Naive thymus-derived CD4-positive, alpha-beta T cell (primary cell): ENCODE measurements at regions of chr3 and their contacts with region 1.

Region 1: GRCh38 chr3:27721717-27722542 is at the start of gene EOMES:
- DNase-seq: peak; percentile 57 to 81 (median 71)
- ATAC-seq: peak; percentile 84
- H3K4me3 ChIP-seq: peak within 1 kb of the TSS; percentile 68
- H3K4me3 Mint-ChIP-seq: peak within 1 kb of the TSS; percentile 79 to 93 (median 86)
- H3K27ac ChIP-seq: no peak within 1 kb of the TSS
- H3K27ac Mint-ChIP-seq: peak within 1 kb of the TSS in 3 of 9 donors; percentile 8 to 74 (median 56)
- H3K4me1 ChIP-seq: peaks cover 16 to 30% of the 10 kb centered on the region in 2 donors
- H3K4me1 Mint-ChIP-seq: peaks cover 19 to 42% (median 31%) of the 10 kb centered on the region in 7 donors
- H3K27me3 ChIP-seq: peaks cover 0 to 41% of the 10 kb centered on the region in 2 donors
- H3K27me3 Mint-ChIP-seq: peaks cover 44 to 89% (median 63%) of the 10 kb centered on the region in 5 donors
- total RNA-seq, gene EOMES: 0.67 to 9.5 (median 1.4) TPM

Region 2: GRCh38 chr3:27209617-27210264 is 512.2 kb before region 1 on chr3:
- CTCF ChIA-PET with region 1: no interaction called
- POLR2A ChIA-PET with region 1: no interaction called
- intact Hi-C with region 1: no loop called
- DNase-seq: no peak
- ATAC-seq: no peak
- H3K4me3 ChIP-seq: no peak overlapping the region
- H3K4me3 Mint-ChIP-seq: no peak overlapping the region
- H3K27ac ChIP-seq: no peak overlapping the region
- H3K27ac Mint-ChIP-seq: no peak overlapping the region
- H3K4me1 ChIP-seq: no peaks in the 10 kb centered on the region
- H3K4me1 Mint-ChIP-seq: no peaks in the 10 kb centered on the region
- H3K27me3 ChIP-seq: no peaks in the 10 kb centered on the region
- H3K27me3 Mint-ChIP-seq: peaks cover 0 to 6% (median 0%) of the 10 kb centered on the region in 5 donors

Region 3: DNA sequence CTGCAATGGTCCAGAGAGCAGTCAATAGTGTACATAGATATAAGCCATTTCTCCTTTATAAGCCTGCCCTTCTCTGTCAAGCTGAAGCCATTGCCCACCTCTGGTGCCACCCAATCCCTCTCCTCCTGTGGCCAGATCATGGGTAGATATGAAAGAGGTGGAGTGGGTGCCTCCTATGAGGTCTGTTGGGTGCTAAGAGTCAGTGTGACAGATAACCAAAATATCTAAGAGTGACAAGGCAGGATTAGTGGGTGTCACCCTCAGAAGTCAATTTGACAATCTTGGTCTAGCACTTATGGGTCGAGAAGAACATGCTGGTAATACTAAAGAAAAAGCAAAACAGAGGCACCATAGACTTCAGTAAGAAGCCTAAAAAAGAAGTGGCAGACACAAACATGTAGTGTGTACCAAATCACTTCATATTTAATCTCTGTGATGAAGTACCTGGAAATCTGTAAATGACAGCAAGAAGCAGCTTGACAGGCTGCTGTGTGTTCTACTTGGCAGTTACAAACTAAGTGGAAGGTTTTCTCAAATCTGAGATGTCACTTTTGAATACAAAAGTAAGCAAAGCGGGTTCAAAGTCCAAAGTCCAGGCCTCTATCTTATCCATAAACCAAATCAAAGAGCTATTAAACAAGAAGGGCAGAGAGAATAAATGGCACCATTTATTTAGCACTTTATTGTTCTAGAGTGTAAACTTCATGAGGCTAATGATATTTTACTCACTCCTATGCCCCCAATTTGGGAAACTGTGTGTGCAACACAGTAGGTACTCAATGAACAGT is 119.1 kb after region 1 on chr3:
- CTCF ChIA-PET with region 1: no interaction called
- POLR2A ChIA-PET with region 1: no interaction called
- intact Hi-C with region 1: no loop called
- DNase-seq: no peak
- ATAC-seq: peak; percentile 70
- H3K4me3 ChIP-seq: no peak overlapping the region
- H3K4me3 Mint-ChIP-seq: no peak overlapping the region
- H3K27ac ChIP-seq: no peak overlapping the region
- H3K27ac Mint-ChIP-seq: no peak overlapping the region
- H3K4me1 ChIP-seq: peaks cover 0 to 18% of the 10 kb centered on the region in 2 donors
- H3K4me1 Mint-ChIP-seq: peaks cover 4 to 32% (median 19%) of the 10 kb centered on the region in 7 donors
- H3K27me3 ChIP-seq: no peaks in the 10 kb centered on the region
- H3K27me3 Mint-ChIP-seq: no peaks in the 10 kb centered on the region

Region 4: DNA sequence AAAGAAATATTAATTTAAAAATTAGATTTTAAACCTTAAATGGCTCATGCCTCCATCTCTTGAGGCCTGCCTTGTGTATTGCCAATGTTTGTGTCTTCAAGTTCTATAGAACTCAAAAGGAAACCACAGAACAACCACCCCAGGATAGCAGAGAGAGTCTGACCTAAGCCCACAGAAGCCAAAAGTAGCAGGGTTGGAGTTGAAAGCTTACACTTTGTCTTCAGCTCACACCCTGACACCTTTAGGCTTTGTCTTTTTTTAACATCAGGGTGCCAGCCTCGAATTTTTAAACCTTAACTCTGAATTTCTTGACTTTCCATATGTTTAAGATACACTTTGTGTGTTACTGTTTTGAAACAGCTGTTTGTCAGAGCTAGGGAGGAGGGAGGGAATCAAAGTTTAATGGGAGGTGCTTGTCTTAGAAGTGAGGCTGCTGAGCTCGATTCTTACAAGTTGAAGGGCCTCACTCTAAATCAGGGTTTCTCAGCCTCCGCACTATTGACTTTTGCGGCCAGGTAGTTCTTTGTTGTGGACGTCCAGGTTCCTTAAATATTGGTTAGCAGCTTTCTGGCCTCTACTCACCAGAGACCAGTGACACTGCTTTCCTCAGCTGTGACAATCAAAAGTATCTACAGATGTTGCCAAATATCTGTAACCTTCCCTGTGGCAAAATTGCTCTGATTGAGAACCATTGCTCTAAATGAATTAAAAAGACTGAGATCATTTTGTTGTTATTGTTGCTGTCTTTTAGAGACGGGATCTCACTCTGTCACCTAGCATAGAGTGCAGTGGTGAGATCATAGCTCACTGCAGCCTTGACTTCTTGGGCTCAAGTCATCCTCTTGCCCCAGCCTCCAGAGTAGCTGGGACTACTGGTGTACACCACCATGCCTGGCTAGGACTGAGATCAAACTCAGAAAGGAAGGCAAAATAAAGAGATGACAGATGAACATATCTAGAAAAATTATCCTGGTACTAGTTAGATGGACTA is 139.4 kb after region 1 on chr3:
- CTCF ChIA-PET with region 1: interaction called, 3 read pairs
- POLR2A ChIA-PET with region 1: interaction called, 3 read pairs
- intact Hi-C with region 1: loop called in 1 of 2 experiments (anchors 2 kb)
- DNase-seq: peak in 6 of 9 donors; percentile 25 to 56 (median 45)
- ATAC-seq: peak; percentile 86
- H3K4me3 ChIP-seq: no peak overlapping the region
- H3K4me3 Mint-ChIP-seq: peak overlapping the region; percentile 4 to 64 (median 55)
- H3K27ac ChIP-seq: peak overlapping the region; percentile 47
- H3K27ac Mint-ChIP-seq: peak overlapping the region; percentile 83 to 95 (median 92)
- H3K4me1 ChIP-seq: peaks cover 23 to 26% of the 10 kb centered on the region in 2 donors
- H3K4me1 Mint-ChIP-seq: peaks cover 23 to 56% (median 52%) of the 10 kb centered on the region in 7 donors
- H3K27me3 ChIP-seq: no peaks in the 10 kb centered on the region
- H3K27me3 Mint-ChIP-seq: no peaks in the 10 kb centered on the region

Region 5: DNA sequence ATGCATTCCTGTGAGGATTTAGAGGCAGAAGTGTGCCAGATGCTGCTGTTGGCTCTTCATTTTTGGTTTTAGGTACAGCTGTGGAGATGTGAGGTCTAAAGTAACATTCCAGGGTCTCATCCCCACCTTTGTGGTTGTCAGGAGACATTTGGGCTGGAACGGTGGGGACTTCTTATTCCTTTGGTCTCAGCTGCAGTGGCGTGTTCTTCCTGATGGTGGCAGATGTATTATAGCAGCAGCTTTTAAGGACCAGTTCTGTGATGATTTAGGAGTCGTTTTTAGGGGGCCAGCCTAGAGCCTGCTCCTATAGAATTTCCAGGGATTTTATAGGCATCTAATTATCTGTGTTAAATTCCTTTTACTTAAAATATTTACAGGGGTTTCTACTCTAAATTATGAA is 221.2 kb after region 1 on chr3:
- CTCF ChIA-PET with region 1: interaction called, 4 read pairs
- POLR2A ChIA-PET with region 1: no interaction called
- intact Hi-C with region 1: loop called in 1 of 2 experiments (anchors 5 kb)
- DNase-seq: peak in 3 of 9 donors; percentile 2 to 12 (median 3)
- ATAC-seq: no peak
- H3K4me3 ChIP-seq: no peak overlapping the region
- H3K4me3 Mint-ChIP-seq: no peak overlapping the region
- H3K27ac ChIP-seq: no peak overlapping the region
- H3K27ac Mint-ChIP-seq: no peak overlapping the region
- H3K4me1 ChIP-seq: no peaks in the 10 kb centered on the region
- H3K4me1 Mint-ChIP-seq: peaks cover 0 to 12% (median 4%) of the 10 kb centered on the region in 7 donors
- H3K27me3 ChIP-seq: no peaks in the 10 kb centered on the region
- H3K27me3 Mint-ChIP-seq: no peaks in the 10 kb centered on the region

Region 6: GRCh38 chr3:28089527-28089897 is 367.6 kb after region 1 on chr3:
- CTCF ChIA-PET with region 1: interaction called, 4 read pairs
- POLR2A ChIA-PET with region 1: interaction called, 5 read pairs
- intact Hi-C with region 1: loop called in 1 of 2 experiments (anchors 1 kb)
- DNase-seq: peak in 5 of 9 donors; percentile 0 to 18 (median 8)
- ATAC-seq: no peak
- H3K4me3 ChIP-seq: no peak overlapping the region
- H3K4me3 Mint-ChIP-seq: peak overlapping the region in 1 of 10 donors; percentile 12
- H3K27ac ChIP-seq: no peak overlapping the region
- H3K27ac Mint-ChIP-seq: no peak overlapping the region
- H3K4me1 ChIP-seq: no peaks in the 10 kb centered on the region
- H3K4me1 Mint-ChIP-seq: peaks cover 0 to 10% (median 0%) of the 10 kb centered on the region in 7 donors
- H3K27me3 ChIP-seq: no peaks in the 10 kb centered on the region
- H3K27me3 Mint-ChIP-seq: no peaks in the 10 kb centered on the region

Region 7: DNA sequence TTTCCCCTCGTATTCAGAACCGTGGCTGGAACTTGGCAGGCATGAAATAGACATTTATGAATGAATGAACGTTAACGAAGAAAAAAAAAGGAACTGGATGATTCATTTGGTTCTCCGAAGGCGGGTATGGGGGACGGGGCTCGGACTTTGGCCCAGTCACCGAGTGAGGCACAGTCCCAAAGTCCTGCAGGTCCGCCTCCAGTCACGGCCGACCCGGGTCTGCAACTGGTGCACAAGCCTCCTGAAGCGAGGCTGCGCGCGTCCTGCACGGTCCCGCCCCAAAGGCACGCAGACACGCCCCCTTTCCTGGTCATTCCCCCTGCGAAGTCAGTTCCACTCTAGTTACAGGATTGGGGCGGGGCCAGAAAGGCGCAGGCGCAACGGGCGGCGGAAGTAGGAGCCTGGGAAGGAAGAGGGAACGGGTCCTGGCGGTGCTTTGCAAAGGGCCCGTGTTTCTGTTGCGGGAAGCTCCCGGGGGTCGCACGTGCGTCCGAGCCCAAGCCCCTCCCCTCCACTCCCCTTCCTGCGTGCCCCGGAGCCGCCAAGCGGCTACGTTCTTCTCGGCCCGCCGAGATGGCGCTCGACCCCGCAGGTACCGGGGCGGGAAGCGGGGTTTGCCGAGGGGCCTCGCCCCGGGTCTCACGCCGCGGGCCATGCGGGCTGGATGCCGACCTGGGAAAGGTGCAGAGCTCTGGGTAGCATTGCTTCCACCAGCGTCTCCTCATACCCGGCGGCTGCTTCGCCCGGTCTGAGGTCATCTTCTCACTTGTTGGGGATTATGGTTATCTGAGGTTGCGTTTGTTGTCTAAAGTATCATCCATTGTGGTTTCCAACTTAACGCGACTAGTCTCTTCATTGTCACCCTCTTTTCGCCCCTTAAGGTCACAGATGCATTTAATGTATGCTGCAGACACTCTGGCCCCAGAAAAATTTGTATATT is 519.6 kb after region 1 on chr3 and contains the start of gene CMC1:
- CTCF ChIA-PET with region 1: interaction called, 3 read pairs
- POLR2A ChIA-PET with region 1: no interaction called
- intact Hi-C with region 1: loop called in 1 of 2 experiments (anchors 1 kb)
- DNase-seq: peak; percentile 69 to 93 (median 83)
- ATAC-seq: peak; percentile 95
- H3K4me3 ChIP-seq: peak within 1 kb of the TSS; percentile 71
- H3K4me3 Mint-ChIP-seq: peak within 1 kb of the TSS; percentile 88 to 97 (median 96)
- H3K27ac ChIP-seq: peak within 1 kb of the TSS; percentile 71
- H3K27ac Mint-ChIP-seq: peak within 1 kb of the TSS; percentile 85 to 96 (median 94)
- H3K4me1 ChIP-seq: peaks cover 16 to 40% of the 10 kb centered on the region in 2 donors
- H3K4me1 Mint-ChIP-seq: peaks cover 32 to 77% (median 60%) of the 10 kb centered on the region in 7 donors
- H3K27me3 ChIP-seq: no peaks in the 10 kb centered on the region
- H3K27me3 Mint-ChIP-seq: no peaks in the 10 kb centered on the region
- total RNA-seq, gene CMC1: 11.0 to 25.1 (median 13.9) TPM

Region 8: DNA sequence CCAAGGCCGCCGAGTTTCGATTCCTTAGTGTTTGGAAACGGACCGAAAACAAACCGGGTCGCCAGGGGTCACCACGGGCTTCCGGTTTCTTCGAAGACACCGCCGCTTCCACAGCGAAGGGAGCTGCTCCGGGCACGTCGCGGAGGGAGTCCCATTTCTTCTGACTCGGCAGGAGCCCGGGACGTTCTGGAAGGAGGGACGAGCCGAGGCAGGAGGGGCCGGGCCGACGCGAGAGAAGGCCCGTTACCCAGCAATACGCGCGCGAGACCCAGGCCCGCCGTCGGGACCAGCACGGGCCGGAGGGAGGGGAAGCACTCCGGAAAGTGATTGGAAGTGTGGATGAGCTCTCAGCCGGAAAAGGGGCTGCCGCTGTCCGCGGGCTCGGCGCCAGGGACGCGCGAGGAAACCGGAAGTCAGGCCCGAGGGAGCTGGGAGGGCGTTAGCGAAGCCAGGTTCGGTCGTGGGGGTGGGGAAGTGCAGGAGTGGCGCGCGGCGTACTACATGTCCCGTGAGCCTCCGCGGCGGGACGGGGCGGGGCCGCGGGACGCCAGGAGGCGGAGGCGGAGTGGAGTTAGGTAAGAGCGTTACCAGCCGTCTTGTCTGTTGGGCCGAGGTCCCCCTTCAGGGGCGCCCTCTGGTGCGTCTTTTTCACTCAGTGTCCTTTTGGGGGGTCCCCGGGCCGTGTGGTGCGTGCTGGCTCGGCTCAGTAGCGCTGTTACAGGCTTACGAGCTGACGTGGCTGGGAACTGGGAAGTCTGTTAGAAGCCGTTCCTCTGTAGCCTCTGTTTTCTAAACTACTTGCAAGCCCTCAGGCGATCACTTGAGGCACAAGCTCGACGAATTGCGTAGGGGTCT is 626.9 kb after region 1 on chr3 and contains the starts of genes AZI2 and ZCWPW2:
- CTCF ChIA-PET with region 1: interaction called, 3 read pairs
- POLR2A ChIA-PET with region 1: interaction called, 4 read pairs
- intact Hi-C with region 1: loop called in 1 of 2 experiments (anchors 2 kb)
- DNase-seq: peak; percentile 88 to 93 (median 92)
- ATAC-seq: peak; percentile 92
- H3K4me3 ChIP-seq: peak within 1 kb of the TSS; percentile 93
- H3K4me3 Mint-ChIP-seq: peak within 1 kb of the TSS; percentile 88 to 99 (median 94)
- H3K27ac ChIP-seq: peak within 1 kb of the TSS; percentile 92
- H3K27ac Mint-ChIP-seq: peak within 1 kb of the TSS; percentile 96 to 100 (median 98)
- H3K4me1 ChIP-seq: peaks cover 35 to 39% of the 10 kb centered on the region in 2 donors
- H3K4me1 Mint-ChIP-seq: peaks cover 30 to 70% (median 57%) of the 10 kb centered on the region in 7 donors
- H3K27me3 ChIP-seq: no peaks in the 10 kb centered on the region
- H3K27me3 Mint-ChIP-seq: no peaks in the 10 kb centered on the region
- total RNA-seq, gene AZI2: 39.7 to 54.0 (median 41.2) TPM
- total RNA-seq, gene ZCWPW2: 0.56 to 1.3 (median 0.81) TPM